Motor neuron (in vitro differentiated cells): ENCODE measurements at regions of chr20 and their contacts with region 1.

Region 1: DNA sequence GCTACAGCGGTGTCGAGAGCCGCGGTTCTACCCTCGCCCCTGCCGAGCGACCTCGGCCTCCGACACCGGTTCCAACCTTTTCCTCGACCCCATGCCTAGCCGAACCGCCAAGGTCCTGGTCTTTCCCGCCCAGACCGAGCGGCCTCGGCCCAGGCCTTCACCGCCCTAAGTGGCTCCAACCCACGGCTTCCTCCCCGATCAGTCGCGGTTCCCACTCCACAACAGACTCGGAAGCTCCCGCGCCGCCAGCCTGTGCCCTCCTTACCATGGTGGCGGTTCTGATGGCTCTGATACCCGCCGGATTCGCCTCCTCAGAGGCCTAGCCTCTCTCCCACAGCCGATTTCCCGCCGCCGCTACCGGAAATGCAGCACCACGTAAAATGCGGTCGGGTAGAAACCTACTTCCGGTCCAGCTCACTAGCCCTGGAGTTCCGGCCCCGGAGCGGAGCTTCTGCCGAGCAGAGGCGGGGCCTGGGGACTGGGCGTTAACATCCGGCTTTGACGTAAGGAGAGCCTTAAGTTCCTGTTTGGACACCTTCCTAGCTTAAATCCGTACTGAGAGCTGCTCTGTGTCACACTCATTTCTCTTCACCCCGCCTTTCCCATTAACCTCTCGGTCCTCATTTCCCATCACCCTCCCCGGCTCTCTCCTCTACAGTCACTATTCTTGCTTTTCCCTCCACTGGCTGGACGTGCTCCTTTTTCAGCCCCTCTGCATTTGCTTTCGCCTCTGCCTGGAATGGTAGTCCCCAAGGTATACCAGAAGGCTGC is at the start of gene SNRPB:
- ATAC-seq: peak; percentile 91 to 99 (median 99)
- H3K4me3 ChIP-seq: peak within 1 kb of the TSS; percentile 49 to 80 (median 77)
- H3K27ac ChIP-seq: peak within 1 kb of the TSS; percentile 78 to 90
- H3K4me1 ChIP-seq: peaks cover 15 to 17% of the 10 kb centered on the region in 2 donors
- total RNA-seq, gene SNRPB: 80.4 to 299 (median 151) TPM

Region 2: DNA sequence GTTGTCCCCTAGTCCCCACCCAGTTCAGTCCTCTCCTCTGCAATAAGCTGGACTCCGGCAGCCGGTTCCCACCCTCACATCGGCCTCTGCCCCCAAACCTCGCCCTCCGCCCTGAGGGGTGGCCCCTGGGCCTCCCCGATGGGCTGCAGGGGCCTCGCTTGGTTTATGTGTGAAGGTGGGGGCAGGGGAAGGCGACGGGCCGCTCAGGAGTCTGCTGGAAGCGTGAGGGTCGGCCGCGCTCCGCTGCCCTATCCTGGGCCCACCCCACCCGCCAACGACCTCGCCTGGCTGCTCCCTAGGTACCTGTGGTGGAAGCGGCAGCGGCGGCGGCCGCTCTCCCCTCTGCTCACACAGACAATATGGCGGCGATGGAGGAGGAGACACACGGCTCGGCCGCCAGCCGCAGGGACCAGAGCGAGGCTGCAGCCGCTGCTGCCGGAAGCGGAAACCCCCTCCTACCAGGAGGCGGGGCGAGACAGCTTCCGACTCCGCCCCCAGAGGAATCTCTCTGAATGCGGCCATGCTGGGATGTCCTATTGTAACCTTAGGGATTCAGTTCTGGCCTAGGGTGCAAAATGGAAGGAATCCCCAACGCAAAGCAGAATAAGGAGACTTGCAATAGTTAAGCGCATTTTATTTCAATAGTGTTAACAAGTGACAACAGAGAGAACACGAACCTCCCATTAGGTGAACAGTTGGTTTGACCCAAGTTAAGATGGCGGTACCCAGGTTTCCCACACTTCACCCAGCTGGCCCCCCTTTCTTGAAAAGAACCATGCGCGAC is 1927.0 kb before region 1 on chr20 and contains the start of gene CSNK2A1:
- in situ Hi-C with region 1: no loop called
- ATAC-seq: peak; percentile 90 to 97 (median 96)
- H3K4me3 ChIP-seq: peak within 1 kb of the TSS; percentile 85 to 98 (median 94)
- H3K27ac ChIP-seq: peak within 1 kb of the TSS; percentile 99 to 100
- H3K4me1 ChIP-seq: peaks cover 10 to 17% of the 10 kb centered on the region in 2 donors
- total RNA-seq, gene CSNK2A1: 107 to 180 (median 148) TPM

Region 3: DNA sequence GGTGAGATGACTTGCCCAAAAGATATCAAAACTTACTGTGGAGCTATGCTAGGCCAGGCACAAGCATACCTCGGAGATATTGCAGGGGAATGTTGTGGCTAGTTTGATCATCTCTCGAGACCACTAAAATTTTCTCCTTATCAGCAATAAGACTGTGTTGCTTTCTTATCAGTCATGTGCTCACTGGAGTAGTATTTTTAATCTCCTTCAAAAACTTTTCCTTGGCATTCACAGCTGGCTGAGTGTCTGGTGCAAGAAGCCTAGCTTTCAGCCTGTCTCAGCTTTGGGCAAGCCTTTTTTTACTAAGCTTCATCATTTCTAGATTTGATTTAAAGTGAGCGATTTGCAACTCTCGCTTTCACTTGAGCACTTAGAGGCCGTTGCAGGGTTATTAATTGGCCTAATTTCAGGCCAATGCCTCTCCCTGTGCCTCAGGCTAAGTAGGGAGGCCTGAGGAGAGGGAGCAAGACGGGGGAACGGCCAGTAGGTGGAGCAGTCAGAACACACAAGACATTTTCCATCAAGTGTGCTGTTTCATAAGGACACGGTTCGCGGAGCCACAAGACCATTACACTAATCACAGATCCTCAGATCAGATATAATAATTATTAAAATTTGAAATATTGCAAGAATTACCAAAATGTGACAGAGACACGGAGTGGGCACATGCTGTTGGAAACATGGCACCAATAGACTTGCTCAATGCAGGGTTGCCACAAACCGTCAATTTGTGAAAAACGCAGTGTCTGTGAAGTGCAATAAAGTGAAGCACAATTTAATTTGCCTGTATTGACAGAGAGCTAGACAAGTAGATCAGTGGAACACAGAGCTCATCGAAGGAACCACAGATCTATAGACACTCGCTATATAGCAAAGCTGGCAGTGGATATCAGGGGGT is 706.2 kb before region 1 on chr20:
- in situ Hi-C with region 1: loop called in 2 of 9 experiments (anchors 25 kb)
- ATAC-seq: peak; percentile 94 to 99 (median 98)
- H3K4me3 ChIP-seq: no peak overlapping the region
- H3K27ac ChIP-seq: no peak overlapping the region
- H3K4me1 ChIP-seq: no peaks in the 10 kb centered on the region

Region 4: DNA sequence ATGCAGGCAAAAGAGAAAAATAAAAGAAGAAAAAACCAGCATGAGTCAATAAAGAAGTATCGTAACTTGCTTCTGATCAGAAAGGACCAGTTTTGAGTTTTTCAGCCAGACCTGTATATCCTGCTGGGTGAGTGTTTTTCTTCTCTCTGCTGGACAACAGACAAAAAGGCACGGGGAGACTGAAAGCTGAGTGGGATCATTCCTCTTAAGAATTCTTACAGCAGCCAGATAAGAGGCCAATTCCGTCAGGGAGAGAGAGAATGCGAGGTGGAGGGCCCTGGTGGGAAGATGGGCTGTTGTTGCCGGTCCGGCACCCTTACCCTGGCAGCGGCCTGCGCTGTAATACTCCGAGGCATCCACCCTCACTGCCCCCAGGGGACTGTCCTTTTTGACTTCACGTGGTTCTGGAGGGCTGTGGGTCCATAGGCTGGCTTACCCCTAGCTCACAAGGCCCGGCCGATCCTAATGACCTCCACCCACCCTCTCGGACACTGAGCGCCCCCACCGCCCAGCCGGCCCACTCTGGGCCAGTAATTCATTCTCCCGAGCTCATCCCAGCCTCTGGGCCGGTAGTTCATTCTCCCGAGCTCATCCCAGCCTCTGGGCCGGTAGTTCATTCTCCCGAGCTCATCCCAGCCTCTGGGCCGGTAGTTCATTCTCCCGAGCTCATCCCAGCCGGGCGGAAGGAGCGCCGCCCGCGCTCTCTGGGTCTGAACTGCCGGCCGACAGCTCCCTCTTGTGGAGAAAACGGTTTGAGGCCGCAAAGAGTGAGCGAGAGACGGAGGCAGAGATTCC is 693.7 kb before region 1 on chr20:
- in situ Hi-C with region 1: loop called in 3 of 9 experiments (anchors 25 kb)
- ATAC-seq: peak; percentile 87 to 99 (median 97)
- H3K4me3 ChIP-seq: peak overlapping the region; percentile 52 to 74 (median 60)
- H3K27ac ChIP-seq: peak overlapping the region; percentile 63 to 67
- H3K4me1 ChIP-seq: peaks cover 3 to 8% of the 10 kb centered on the region in 2 donors

Region 5: DNA sequence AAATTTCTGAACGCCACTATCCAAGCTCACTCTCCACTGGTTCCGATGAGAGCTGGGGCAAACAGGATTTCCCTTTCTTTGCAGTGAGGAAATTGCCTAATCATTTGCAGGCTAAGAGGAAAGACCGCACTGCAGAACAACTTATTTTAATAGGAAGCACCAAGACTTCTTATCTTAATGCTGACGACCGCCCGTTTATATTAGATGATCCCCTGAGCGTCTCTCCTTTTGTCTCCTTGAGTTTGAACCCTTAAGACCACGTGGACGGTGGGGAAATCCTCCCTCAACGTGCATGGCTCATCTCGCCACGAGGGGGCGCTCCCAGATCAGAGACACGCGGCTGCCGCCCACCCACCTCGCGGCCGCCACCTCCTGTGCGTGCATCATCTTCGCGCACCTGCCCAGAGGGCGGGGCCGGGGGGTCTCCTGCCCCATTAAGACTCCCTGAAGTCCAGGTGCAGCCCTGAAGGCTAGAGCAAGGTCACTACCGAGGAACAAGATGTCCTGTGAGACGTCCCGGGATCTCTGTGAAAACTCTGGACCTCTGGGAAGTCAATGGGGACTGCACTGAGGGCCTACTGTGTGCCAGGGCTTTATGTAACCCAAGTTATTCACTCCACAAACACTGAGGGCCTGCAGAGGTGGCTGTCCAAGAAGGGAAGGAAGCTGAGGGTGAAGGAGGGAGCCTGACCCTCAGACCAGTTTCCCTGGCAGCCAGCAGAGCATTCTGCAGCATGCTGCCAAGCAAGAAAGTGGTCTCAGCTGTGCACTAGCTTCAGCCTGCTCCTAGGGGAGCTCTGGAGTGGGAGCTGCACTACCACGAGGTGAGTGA is 504.9 kb before region 1 on chr20:
- in situ Hi-C with region 1: loop called in 1 of 9 experiments (anchors 25 kb)
- ATAC-seq: peak; percentile 54 to 92 (median 76)
- H3K4me3 ChIP-seq: no peak overlapping the region
- H3K27ac ChIP-seq: no peak overlapping the region
- H3K4me1 ChIP-seq: peaks cover 0 to 6% of the 10 kb centered on the region in 2 donors

Region 6: DNA sequence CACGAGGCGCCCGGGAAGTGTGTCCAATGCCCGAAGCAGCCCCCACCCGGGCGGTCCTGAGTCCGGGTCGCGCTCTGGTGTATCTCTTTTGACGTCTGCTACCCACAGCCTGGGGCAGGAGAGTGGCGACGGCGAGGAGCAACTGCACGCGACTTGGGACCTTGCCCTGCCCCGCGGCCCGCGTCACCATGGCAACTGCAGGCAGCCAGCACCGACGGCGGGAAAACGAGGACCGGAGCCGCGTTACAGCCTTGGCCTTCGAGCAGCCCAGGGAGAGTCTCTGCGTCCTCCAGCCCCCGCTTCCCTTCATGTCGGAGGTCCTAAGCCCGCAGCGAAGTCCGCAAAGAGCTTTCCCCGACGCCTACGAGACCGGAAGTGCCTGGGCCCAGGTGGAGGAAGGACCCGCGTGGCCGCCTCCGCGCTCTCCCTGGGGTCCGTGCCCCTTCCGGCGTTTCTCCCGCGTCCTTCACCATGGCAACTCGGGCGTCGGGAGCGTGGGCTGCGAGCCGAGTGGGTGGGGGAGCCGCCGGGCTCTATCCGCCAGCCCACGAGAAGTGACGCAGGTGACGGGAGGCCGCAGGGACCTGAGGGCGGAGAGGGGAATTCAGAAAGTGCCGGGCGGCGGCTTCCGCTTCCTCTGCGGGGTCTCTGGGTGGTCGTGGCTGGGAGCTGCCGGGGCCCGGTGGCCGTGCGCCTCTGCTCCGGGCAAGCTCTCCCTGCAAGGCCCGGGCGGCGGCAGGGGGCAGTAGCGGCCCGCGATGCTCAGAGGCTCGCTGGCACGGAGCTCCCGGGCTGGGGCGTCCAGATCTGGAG is 263.4 kb before region 1 on chr20:
- in situ Hi-C with region 1: loop called in 5 of 9 experiments (anchors 25 kb)
- ATAC-seq: peak; percentile 87 to 97 (median 90)
- H3K4me3 ChIP-seq: peak overlapping the region; percentile 43 to 64 (median 46)
- H3K27ac ChIP-seq: peak overlapping the region in 1 of 2 donors; percentile 28
- H3K4me1 ChIP-seq: peaks cover 0 to 2% of the 10 kb centered on the region in 2 donors